Endothelial cell of umbilical vein (primary cell): ENCODE measurements at regions of chr11 and their contacts with region 1.

Region 1: GRCh38 chr11:72668611-72669347 is 5.4 kb downstream of the PDE2A start:
- DNase-seq: no peak
- H3K4me3 ChIP-seq: no peak overlapping the region
- H3K27ac ChIP-seq: no peak overlapping the region
- H3K4me1 ChIP-seq: no peaks in the 10 kb centered on the region
- H3K27me3 ChIP-seq: peaks cover 9 to 15% of the 10 kb centered on the region in 2 experiments
- CTCF ChIP-seq: no peak
- POLR2A ChIP-seq: no peak

Region 2: DNA sequence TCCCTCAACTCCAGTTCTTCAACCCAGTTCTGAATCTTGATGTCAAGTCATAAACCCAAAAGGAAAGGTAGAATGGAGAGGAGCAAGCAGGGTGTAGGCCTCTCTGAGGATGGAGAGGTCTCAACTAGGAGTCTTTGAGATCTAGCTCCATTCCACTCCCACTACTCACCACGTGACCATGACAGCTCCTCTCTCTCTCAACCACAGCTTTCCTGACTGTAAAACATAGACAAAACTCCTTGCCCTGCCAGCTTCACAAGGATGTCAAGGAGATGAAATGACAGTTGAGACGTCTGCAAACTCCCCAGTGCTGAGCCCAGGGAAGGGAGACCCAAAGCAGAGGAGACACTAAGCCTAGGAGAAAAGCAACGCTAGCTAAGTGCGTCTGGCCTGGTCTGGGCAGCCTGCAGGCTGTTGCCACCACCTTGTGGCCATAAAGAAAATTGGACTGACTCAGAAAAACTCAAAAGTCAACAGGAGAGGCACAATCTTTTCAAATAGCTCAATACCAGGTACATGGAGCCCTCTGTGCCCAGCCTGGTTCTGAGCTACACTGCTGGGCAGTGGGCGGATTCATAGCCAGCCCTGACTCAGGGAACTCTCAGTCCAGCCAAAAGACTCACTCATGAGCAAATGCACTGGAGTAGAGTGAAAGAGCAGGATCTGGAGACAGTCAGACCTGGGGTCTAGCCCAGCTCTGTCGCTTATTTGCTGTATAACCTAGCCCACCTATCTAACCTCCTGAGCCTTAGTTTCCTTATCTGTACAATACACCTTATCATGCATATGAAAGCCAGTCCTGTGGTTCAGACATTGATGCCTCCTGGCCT is 237.8 kb before region 1 on chr11:
- CTCF ChIA-PET with region 1: no interaction called
- POLR2A ChIA-PET with region 1: no interaction called
- dilution Hi-C with region 1: no loop called
- intact Hi-C with region 1: no loop called
- DNase-seq: peak; percentile 52
- H3K4me3 ChIP-seq: no peak overlapping the region
- H3K27ac ChIP-seq: no peak overlapping the region
- H3K4me1 ChIP-seq: peaks cover 4% of the 10 kb centered on the region
- H3K27me3 ChIP-seq: no peaks in the 10 kb centered on the region
- CTCF ChIP-seq: peak; percentile 57 to 79
- POLR2A ChIP-seq: no peak

Region 3: DNA sequence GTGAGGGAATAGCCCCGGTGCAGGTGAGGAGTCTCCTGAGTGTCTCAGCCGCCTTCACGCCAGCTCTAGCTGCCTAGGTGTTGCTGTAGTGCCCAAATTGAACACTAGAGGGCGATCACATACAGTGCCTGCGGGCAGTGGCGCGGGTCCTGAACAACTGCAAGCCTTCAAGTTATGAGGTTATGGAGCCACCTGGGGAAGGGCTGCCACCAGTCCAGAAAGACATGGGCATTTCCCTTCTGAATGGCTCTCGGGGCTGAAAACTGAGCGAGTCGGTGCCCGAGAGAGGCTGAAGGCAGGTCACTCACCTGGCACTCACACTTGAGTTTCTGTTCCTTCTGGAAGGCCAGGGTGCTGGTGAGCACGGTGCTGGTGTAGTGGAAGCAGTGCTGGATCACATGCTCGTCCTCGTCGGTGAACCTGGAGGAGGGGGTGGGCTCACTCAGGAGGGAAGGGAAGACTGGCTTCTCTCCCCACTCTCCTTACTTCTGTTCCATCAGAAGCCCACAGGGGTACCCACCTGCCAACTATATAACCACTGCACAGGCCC is 82.9 kb before region 1 on chr11:
- CTCF ChIA-PET with region 1: interaction called, 12 read pairs
- POLR2A ChIA-PET with region 1: no interaction called
- dilution Hi-C with region 1: no loop called
- intact Hi-C with region 1: no loop called
- DNase-seq: peak; percentile 69
- H3K4me3 ChIP-seq: no peak overlapping the region
- H3K27ac ChIP-seq: no peak overlapping the region
- H3K4me1 ChIP-seq: no peaks in the 10 kb centered on the region
- H3K27me3 ChIP-seq: peaks cover 2 to 6% of the 10 kb centered on the region in 2 experiments
- CTCF ChIP-seq: peak; percentile 83 to 86
- POLR2A ChIP-seq: no peak

Region 4: GRCh38 chr11:72951193-72951592 is 282.4 kb after region 1 on chr11:
- CTCF ChIA-PET with region 1: no interaction called
- POLR2A ChIA-PET with region 1: no interaction called
- dilution Hi-C with region 1: no loop called
- intact Hi-C with region 1: no loop called
- DNase-seq: no peak
- H3K4me3 ChIP-seq: no peak overlapping the region
- H3K27ac ChIP-seq: no peak overlapping the region
- H3K4me1 ChIP-seq: peaks cover 10% of the 10 kb centered on the region
- H3K27me3 ChIP-seq: no peaks in the 10 kb centered on the region
- CTCF ChIP-seq: no peak
- POLR2A ChIP-seq: no peak